ENCODE measurements at regions of chr1 and their contacts with region 1.

Region 1: DNA sequence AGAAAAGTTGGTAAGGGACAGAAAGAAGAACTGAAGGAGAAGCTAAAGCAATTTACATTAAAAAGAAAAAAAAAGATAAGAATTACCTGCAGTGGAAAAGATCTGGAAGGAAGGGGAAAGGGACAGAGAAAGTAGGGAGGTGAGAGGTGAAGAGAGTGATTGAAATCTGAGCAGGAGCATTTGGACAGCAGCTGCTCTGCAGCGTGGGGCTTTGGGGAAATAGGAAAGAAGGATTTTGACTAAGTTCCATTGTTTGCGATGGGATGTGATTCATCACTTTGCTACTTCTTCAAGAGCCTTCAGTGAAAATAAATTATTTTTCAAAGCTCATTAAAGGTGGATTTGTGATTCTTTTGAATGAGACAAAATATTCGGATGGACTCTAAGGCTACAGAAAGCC is 26.1 kb upstream of the NMNAT2 start:
- DNase-seq: no peak
- H3K4me3 ChIP-seq: no peak overlapping the region
- H3K27ac ChIP-seq: no peak overlapping the region
- H3K4me1 ChIP-seq: no peaks in the 10 kb centered on the region
- H3K27me3 ChIP-seq: no peaks in the 10 kb centered on the region
- CTCF ChIP-seq: no peak
- EP300 ChIP-seq: no peak
- POLR2A ChIP-seq: no peak

Region 2: DNA sequence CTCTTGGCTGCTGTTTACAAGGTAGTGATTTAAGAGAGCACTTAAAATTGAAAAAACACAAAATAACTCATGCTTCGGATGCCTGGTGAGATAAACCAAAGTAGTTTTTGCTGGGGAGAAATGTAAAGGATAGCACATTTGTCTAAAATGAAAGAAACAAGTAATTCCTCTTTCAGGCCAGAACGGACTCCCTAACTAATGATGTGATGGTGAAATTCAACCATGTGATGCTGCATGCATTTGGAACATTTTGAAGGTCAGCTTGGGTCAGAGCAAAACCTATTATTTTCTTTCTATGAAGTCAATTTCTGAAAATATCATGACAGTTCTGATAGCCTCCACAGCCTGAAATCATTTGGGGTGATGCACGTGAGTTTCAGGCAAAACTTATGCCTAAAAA is 53.7 kb before region 1 on chr1:
- intact Hi-C with region 1: loop called in 1 of 4 experiments (anchors 2 kb)
- DNase-seq: no peak
- H3K4me3 ChIP-seq: no peak overlapping the region
- H3K27ac ChIP-seq: peak overlapping the region in 1 of 2 donors; percentile 5
- H3K4me1 ChIP-seq: no peaks in the 10 kb centered on the region
- H3K27me3 ChIP-seq: no peaks in the 10 kb centered on the region
- CTCF ChIP-seq: no peak
- EP300 ChIP-seq: no peak
- POLR2A ChIP-seq: no peak

Region 3: DNA sequence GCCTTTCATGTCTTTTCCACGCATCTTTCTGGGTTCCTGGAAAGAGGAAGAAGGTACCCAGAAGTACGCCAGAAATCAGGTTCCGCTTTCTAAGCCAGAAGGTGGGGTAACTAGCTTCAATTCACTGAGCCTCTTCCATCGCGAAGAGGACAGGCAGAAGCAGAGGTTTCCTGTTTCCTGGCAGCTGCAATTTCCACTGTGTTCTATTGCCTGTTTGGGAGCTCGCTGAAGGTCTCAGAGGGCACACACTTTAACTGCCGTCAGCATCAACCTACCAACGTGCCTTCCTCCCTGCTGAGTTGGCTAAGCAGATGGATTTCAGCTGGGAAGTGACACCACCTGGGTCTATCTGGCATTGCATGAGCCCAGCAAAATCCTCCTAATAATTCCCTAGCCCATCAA is 136.0 kb after region 1 on chr1:
- intact Hi-C with region 1: no loop called
- DNase-seq: no peak
- H3K4me3 ChIP-seq: no peak overlapping the region
- H3K27ac ChIP-seq: no peak overlapping the region
- H3K4me1 ChIP-seq: no peaks in the 10 kb centered on the region
- H3K27me3 ChIP-seq: no peaks in the 10 kb centered on the region
- CTCF ChIP-seq: no peak
- EP300 ChIP-seq: no peak
- POLR2A ChIP-seq: no peak

Region 4: GRCh38 chr1:183676586-183677189 is 232.4 kb after region 1 on chr1:
- intact Hi-C with region 1: no loop called
- DNase-seq: no peak
- H3K4me3 ChIP-seq: no peak overlapping the region
- H3K27ac ChIP-seq: no peak overlapping the region
- H3K4me1 ChIP-seq: peaks cover 5% of the 10 kb centered on the region
- H3K27me3 ChIP-seq: no peaks in the 10 kb centered on the region
- CTCF ChIP-seq: no peak
- EP300 ChIP-seq: no peak
- POLR2A ChIP-seq: no peak

Measured in ovary (tissue), 10 donors.